Activated naive CD4-positive, alpha-beta T cell treated with anti-CD3 and anti-CD28 coated beads for 36 hours (primary cell): ENCODE measurements at regions of chr11 and their contacts with region 1.

Region 1: DNA sequence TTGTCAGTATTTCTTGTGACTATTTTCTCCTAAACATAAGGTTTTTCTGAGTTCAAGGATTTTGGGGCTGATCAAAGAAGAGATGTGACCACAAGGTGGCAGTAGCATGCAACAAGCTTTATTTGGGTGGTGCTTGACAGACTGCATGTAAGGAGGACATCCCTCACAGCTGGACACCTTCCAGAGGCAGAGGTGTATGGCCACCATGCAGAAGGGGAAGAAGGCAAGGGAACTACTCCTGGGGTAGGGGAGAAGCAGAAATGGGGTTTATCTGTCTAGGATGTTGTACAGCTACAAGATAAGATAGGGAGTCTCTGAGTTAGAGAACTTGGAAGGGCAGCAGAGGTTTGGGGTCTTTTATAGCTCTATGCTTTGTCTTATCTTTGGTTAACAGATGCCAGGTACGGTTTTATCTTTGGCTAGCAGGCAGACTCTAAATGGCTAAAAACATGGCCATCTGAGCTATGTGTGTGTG is 5.1 kb upstream of the BIRC2 start:
- DNase-seq: peak; percentile 90
- H3K4me3 Mint-ChIP-seq: no peak overlapping the region
- H3K27ac Mint-ChIP-seq: no peak overlapping the region
- H3K4me1 Mint-ChIP-seq: peaks cover 46% of the 10 kb centered on the region
- H3K27me3 Mint-ChIP-seq: no peaks in the 10 kb centered on the region

Region 2: GRCh38 chr11:102197670-102198139 is 144.2 kb before region 1 on chr11:
- CTCF ChIA-PET with region 1: no interaction called
- intact Hi-C with region 1: no loop called
- DNase-seq: no peak
- H3K4me3 Mint-ChIP-seq: no peak overlapping the region
- H3K27ac Mint-ChIP-seq: no peak overlapping the region
- H3K4me1 Mint-ChIP-seq: no peaks in the 10 kb centered on the region
- H3K27me3 Mint-ChIP-seq: peaks cover 10% of the 10 kb centered on the region

Region 3: DNA sequence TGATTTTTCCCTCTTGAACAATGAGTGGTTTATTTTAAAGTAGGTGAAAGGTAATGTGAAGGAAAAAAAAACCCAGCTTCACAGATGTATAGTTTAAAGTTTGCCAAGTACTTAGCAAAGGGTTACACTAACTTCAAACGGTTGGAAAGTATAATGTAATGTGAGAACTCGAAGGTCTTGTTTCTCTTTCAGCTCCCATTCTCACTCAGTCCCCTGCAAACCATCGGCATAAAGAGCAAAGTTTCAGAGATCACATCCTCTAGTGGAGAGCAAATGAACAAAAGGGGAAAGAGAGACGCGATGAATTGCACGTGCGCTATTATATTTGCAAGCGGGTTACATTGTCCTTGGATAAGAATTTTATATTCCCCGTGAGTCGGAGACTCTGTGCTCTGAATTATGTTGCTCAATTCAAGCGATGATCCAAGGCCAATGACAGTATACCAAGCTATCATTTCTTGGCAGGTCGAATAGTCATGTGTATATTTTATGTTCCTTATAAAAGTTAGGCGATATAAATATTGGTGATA is 62.2 kb before region 1 on chr11:
- CTCF ChIA-PET with region 1: interaction called, 10 read pairs
- intact Hi-C with region 1: no loop called
- DNase-seq: peak; percentile 38
- H3K4me3 Mint-ChIP-seq: peak overlapping the region; percentile 23
- H3K27ac Mint-ChIP-seq: no peak overlapping the region
- H3K4me1 Mint-ChIP-seq: peaks cover 7% of the 10 kb centered on the region
- H3K27me3 Mint-ChIP-seq: peaks cover 6% of the 10 kb centered on the region

Region 4: GRCh38 chr11:102367364-102367763 is 25.5 kb after region 1 on chr11:
- CTCF ChIA-PET with region 1: interaction called, 19 read pairs
- intact Hi-C with region 1: no loop called
- DNase-seq: no peak
- H3K4me3 Mint-ChIP-seq: no peak overlapping the region
- H3K27ac Mint-ChIP-seq: peak overlapping the region; percentile 1
- H3K4me1 Mint-ChIP-seq: peaks cover 34% of the 10 kb centered on the region
- H3K27me3 Mint-ChIP-seq: no peaks in the 10 kb centered on the region

Region 5: GRCh38 chr11:102396708-102397563 is 55.1 kb after region 1 on chr11:
- CTCF ChIA-PET with region 1: interaction called, 13 read pairs
- intact Hi-C with region 1: loop called (anchors 1 kb)
- DNase-seq: no peak
- H3K4me3 Mint-ChIP-seq: no peak overlapping the region
- H3K27ac Mint-ChIP-seq: peak overlapping the region; percentile 63
- H3K4me1 Mint-ChIP-seq: peaks cover 48% of the 10 kb centered on the region
- H3K27me3 Mint-ChIP-seq: no peaks in the 10 kb centered on the region

Region 6: GRCh38 chr11:102513869-102514268 is 172.0 kb after region 1 on chr11:
- CTCF ChIA-PET with region 1: interaction called, 29 read pairs
- intact Hi-C with region 1: loop called (anchors 1 kb)
- DNase-seq: no peak
- H3K4me3 Mint-ChIP-seq: no peak overlapping the region
- H3K27ac Mint-ChIP-seq: no peak overlapping the region
- H3K4me1 Mint-ChIP-seq: no peaks in the 10 kb centered on the region
- H3K27me3 Mint-ChIP-seq: no peaks in the 10 kb centered on the region

Region 7: GRCh38 chr11:102577182-102577581 is 235.3 kb after region 1 on chr11:
- CTCF ChIA-PET with region 1: no interaction called
- intact Hi-C with region 1: no loop called
- DNase-seq: no peak
- H3K4me3 Mint-ChIP-seq: no peak overlapping the region
- H3K27ac Mint-ChIP-seq: peak overlapping the region; percentile 34
- H3K4me1 Mint-ChIP-seq: peaks cover 29% of the 10 kb centered on the region
- H3K27me3 Mint-ChIP-seq: no peaks in the 10 kb centered on the region

Region 8: DNA sequence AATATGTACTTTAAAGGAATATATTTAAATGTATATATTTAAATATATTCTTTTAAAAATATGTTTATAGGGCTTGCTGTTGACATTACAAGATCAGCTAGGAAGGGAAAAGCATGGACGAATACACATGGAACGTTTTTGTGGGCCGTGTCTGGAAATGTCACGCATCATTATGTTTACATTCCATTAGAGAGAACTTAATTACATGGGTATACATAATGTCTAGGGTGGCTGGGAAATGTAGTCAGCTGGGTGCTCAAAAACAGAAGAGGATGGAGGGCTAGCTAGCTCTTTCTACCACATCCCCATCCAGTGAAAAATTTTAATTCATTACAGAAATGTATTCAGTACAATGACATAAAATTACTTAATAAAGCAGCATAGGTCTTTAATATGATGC is 1138.5 kb after region 1 on chr11:
- CTCF ChIA-PET with region 1: no interaction called
- intact Hi-C with region 1: no loop called
- DNase-seq: no peak
- H3K4me3 Mint-ChIP-seq: no peak overlapping the region
- H3K27ac Mint-ChIP-seq: no peak overlapping the region
- H3K4me1 Mint-ChIP-seq: no peaks in the 10 kb centered on the region
- H3K27me3 Mint-ChIP-seq: peaks cover 3% of the 10 kb centered on the region